ENCODE measurements at regions of chr1 and their contacts with region 1.

Region 1: GRCh38 chr1:211578640-211579433 is at the start of gene SLC30A1:
- DNase-seq: peak; percentile 100
- ATAC-seq: peak; percentile 94
- total RNA-seq, gene SLC30A1: 11.5 TPM

Region 2: DNA sequence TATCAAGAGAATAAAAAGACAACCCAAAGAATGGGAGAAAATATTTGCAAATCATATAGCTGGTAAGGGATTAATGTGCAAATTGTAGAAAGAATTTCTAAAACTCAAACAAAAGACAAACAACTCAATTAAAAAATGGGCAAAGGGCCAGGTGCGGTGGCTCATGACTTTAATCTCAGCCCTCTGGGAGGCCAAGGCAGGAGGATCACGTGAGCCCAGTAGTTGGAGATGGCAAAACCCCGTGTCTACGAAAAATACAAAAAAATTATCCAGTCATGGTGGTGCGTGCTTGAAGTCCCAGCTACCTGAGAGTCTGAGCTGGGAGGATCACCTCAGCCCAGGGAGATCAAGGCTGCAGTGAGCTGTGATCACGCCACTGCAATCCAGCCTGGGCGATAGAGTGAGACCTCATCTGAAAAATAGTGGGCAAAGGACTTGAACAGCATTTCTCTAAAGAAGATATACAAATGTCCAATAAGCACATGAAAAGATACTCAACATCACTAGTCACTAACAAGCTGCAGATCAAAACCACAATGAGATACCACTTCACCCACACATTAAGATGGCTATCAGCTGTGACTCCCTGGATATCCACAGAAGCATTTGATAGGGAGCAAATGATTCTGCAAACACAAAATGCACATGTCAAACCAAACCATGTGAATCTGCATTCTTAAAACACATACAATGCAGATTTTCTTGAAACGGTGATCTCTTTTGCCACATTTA is 20.8 kb before region 1 on chr1:
- intact Hi-C with region 1: no loop called
- DNase-seq: no peak
- ATAC-seq: no peak

Region 3: DNA sequence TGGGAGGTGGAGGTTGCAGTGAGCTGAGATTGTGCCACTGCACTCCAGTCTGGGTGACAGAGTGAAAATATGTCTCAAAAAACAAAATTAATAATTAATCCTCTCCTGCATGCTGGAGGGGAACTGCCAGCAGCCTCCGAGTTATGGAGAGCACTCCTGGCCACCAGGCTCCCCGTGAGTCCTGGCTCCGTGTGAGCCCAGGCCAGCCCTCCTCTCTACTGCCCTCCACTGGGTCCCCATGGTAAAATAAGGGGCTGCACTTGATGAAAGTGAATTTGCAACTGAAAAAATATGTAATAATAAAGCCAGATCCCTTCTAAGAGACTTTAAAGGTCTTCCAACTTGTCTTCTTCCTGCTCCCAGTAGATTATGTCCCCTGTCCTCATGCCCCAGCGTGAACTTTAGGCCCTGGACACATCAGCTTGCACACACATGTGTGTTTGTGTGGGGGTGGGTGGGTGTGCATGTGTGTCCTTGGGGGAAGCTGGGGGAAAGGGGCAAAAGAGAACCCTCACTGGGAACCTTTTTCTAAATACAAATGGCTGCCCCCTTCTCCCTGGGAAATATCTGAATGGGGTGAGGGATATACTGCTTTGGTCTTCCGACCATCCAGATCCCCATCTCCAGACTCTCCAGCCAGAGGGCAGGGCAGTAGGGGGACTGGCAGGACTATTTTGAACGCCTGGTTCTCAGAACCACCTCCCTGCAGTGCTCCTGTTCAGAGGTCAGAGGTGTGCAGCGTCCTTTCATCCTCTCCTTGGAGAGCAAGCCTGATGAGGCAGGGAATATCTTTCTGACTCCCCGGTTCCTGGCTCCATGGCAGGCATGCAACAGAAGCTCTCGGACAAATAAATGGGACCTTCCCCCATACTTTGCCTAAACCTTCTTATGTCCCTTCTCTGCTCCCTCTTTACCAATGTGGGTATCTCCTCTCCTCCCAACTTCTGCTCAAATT is 70.4 kb after region 1 on chr1:
- intact Hi-C with region 1: loop called (anchors 5 kb)
- DNase-seq: peak; percentile 69
- ATAC-seq: peak; percentile 93